ENCODE measurements at regions of chr6 and their contacts with region 1.

Region 1: DNA sequence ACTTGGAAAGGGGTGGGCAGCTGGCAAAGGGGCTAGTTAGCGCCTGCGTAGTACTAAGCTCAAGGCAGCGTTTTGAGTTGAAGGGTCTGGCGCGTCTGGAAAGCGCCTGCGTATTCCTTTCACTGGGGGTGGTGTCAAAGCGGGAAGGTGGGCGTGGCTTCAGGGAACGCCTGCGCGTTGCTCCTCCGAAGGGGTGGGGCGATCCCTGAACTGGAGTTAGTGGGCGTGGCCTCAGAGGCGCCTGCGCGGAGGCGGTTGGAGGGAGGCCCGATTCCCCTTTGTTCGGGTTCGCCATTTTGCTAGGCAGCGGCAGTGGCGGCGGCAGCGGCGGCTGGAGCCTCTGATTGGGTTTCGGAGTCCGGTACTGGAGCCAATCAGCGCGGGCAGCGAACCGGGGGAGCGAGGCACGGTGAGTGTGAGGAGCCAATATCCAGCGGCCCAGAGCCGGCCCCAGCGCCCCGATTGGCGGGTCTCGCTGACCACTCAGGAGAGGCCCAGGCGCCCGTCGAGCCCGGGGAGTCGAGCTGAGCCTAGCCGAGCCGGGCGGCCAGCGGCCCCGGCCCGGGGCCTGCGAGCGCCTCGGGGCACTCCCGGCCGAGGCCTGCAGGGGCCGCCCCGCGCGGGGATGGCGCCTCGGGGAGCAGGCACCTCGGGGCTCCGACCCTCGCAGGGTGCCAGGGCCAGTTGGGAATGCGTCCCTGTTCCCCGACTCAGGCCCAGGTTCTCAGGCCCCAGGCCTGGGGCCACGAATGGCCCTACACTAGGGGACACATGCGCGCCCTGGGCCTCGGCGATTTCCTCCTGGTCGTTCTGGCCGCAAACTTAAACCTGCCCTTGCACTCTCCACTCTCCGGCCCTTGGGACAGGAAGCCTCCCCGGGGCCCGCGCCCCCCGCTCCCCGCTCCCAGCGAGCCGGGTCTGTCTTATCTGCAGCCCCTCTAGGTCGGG is at the start of gene NFYA:
- DNase-seq: peak; percentile 100
- H3K4me3 Mint-ChIP-seq: peak within 1 kb of the TSS; percentile 98
- H3K27ac Mint-ChIP-seq: peak within 1 kb of the TSS; percentile 99
- H3K4me1 Mint-ChIP-seq: peaks cover 56% of the 10 kb centered on the region
- H3K27me3 Mint-ChIP-seq: no peaks in the 10 kb centered on the region
- total RNA-seq, gene NFYA: 28.1 and 28.2 TPM in 2 replicates

Region 2: DNA sequence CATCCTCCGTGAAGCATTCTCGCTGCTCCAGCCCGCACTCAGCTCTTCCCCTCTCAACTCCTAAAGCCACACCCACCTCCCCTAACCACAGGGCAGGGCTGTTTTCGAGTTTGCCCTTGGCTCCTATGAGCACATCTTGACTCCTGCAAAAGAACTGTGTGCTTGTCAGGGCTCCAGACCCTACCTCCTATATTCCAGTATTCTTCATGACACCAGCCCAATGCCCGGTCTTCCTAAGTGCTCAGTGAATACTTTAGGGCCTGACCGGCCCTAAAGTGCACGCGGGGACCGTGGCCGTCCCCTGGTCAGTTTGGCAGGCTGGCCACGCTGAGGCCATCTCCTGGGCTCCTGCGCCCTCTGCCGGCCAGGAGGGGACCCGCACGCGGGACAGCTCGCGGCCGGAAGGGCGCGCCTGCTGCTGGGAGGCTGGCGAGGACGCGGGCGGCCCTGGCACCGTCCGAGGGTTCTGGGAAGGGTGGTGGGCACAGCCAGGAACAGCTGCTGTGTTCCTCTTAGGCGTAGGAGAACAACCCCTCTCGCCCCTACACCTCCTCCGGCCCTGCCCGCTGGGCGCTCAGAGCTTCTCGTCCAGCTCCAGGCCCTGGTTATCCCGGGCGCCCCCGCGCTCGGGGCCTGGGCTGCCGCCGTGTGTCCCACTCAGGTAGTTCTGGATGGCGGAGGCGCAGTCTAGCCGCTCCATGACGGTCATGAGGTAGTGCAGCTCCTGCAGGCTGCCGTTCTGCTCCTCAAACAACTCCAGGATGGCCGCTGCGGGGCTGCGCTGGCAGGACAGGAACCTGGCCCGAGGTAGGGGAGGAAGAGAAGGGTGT is 44.9 kb before region 1 on chr6:
- intact Hi-C with region 1: loop called (anchors 1 kb)
- DNase-seq: peak; percentile 77
- H3K4me3 Mint-ChIP-seq: peak overlapping the region; percentile 89
- H3K27ac Mint-ChIP-seq: peak overlapping the region; percentile 94
- H3K4me1 Mint-ChIP-seq: peaks cover 19% of the 10 kb centered on the region
- H3K27me3 Mint-ChIP-seq: no peaks in the 10 kb centered on the region

Region 3: GRCh38 chr6:41147917-41148316 is 75.0 kb after region 1 on chr6:
- intact Hi-C with region 1: loop called (anchors 2 kb)
- DNase-seq: no peak
- H3K4me3 Mint-ChIP-seq: peak overlapping the region; percentile 24
- H3K27ac Mint-ChIP-seq: peak overlapping the region; percentile 54
- H3K4me1 Mint-ChIP-seq: peaks cover 42% of the 10 kb centered on the region
- H3K27me3 Mint-ChIP-seq: peaks cover 5% of the 10 kb centered on the region

Region 4: DNA sequence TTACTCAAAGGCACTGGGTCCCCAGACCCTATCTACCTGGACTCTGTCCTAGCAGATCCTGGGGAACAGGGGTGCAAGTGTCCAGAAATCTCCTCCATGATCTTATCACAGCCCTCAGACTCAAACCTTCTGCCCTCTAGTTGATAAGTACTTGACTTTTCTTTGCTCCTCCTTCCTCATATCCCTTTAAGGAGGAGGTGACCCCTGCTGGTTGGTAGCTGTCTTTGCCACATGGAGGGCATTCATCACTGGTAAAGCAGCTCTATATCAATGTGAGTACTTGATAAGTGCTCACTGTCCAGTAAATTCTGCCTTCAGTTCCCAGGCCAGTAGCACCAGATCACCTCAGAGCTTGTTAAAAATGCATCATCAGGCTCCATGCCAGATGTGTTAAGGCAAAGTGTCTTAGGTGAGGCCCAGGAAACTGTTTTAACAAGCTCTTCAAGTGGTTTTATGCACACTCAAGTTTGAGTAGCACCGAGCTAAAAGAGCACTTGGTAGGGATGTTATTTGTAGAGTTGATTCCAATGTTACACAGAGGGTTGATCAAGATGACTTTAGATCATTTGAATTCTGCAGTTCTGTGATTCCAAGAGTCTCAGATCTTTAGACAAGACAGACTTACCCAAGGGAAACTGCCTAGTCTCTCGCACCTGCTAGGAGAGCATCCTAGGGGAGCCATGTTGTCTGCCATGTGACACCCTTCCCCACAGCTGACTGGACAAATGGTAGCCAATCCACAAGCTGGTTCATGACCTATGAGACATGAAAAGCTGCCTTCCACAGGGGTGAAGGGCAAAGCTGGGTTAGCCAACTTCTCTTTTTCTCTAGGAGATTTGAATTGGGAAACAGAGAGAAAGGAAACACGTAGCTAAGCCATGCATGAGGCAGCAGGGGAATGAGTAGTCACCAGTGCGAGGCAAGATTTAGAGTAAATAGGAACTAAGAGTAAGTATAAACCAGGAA is 109.4 kb after region 1 on chr6:
- intact Hi-C with region 1: loop called (anchors 5 kb)
- DNase-seq: peak; percentile 47
- H3K4me3 Mint-ChIP-seq: no peak overlapping the region
- H3K27ac Mint-ChIP-seq: no peak overlapping the region
- H3K4me1 Mint-ChIP-seq: peaks cover 16% of the 10 kb centered on the region
- H3K27me3 Mint-ChIP-seq: peaks cover 9% of the 10 kb centered on the region

Region 5: GRCh38 chr6:41531591-41532582 is 458.9 kb after region 1 on chr6:
- intact Hi-C with region 1: loop called (anchors 2 kb)
- DNase-seq: peak; percentile 45
- H3K4me3 Mint-ChIP-seq: peak overlapping the region; percentile 53
- H3K27ac Mint-ChIP-seq: peak overlapping the region; percentile 70
- H3K4me1 Mint-ChIP-seq: peaks cover 16% of the 10 kb centered on the region
- H3K27me3 Mint-ChIP-seq: peaks cover 73% of the 10 kb centered on the region

Region 6: DNA sequence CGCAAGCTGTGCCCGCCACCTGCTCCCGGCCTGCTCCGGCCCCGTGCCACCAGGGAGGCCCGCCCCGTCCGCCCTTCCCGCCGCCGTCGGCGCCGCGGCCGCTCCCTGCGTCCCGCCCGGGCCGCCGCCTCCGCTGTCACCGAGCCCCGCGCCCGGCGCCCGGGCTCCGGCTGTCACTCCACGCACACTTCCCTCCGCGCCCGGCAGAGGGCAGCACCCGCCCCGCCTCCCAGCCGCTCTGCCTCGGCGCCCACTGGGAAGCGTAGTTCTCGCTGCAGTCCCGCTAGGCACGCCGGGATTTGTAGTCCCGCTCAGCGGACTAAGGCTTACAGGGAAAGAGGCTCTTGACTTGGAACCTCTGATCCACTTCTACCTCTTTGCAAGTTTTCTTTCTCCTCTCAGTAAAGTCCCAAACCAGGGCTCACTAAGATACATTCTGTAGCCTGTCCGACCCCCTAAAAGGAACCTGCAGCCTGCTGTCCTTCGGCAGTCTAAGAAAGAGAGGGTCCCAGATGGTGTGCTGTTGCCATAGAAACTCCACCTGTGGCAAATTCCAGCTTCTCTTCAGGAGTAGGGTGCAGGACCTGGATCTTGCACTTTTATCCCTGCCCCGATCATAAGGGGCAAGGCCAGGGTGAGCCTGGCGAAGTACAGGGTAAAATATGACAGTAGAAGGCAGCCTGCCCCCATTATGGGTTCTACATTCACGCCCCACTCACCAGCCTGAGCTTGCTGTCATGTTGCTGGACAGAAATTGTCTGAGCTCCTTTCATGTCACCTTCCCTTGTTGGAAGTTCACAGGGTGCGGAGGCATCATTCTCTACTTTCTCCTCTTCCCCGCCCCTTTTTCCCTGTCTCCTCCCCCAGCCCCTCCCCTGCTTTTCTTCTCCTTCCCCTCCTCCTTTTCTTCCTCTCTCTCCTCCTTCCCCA is 662.7 kb after region 1 on chr6 and contains the start of gene TFEB:
- intact Hi-C with region 1: loop called (anchors 10 kb)
- DNase-seq: peak; percentile 92
- H3K4me3 Mint-ChIP-seq: peak within 1 kb of the TSS; percentile 72
- H3K27ac Mint-ChIP-seq: no peak within 1 kb of the TSS
- H3K4me1 Mint-ChIP-seq: peaks cover 22% of the 10 kb centered on the region
- H3K27me3 Mint-ChIP-seq: no peaks in the 10 kb centered on the region
- total RNA-seq, gene TFEB: 11.2 and 13.4 TPM in 2 replicates